Calu3 (cell line): ENCODE measurements at regions of chr17 and their contacts with region 1.

Region 1: DNA sequence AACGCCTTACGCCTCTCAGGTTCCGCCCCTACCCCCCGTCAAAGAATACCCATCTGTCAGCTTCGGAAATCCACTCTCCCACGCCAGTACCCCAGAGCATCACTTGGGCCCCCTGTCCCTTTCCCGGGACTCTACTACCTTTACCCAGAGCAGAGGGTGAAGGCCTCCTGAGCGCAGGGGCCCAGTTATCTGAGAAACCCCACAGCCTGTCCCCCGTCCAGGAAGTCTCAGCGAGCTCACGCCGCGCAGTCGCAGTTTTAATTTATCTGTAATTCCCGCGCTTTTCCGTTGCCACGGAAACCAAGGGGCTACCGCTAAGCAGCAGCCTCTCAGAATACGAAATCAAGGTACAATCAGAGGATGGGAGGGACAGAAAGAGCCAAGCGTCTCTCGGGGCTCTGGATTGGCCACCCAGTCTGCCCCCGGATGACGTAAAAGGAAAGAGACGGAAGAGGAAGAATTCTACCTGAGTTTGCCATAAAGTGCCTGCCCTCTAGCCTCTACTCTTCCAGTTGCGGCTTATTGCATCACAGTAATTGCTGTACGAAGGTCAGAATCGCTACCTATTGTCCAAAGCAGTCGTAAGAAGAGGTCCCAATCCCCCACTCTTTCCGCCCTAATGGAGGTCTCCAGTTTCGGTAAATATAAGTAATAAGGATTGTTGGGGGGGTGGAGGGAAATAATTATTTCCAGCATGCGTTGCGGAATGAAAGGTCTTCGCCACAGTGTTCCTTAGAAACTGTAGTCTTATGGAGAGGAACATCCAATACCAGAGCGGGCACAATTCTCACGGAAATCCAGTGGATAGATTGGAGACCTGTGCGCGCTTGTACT is at the start of gene BRCA1:
- DNase-seq: peak; percentile 98
- H3K4me3 Mint-ChIP-seq: peak within 1 kb of the TSS; percentile 97
- H3K27ac Mint-ChIP-seq: peak within 1 kb of the TSS; percentile 99
- H3K4me1 Mint-ChIP-seq: peaks cover 51% of the 10 kb centered on the region
- H3K27me3 Mint-ChIP-seq: no peaks in the 10 kb centered on the region
- CTCF ChIP-seq: no peak
- total RNA-seq, gene BRCA1: 62.7 and 67.1 TPM in 2 replicates

Region 2: GRCh38 chr17:43024407-43025289 is 100.7 kb before region 1 on chr17 and contains the start of gene RND2:
- CTCF ChIA-PET with region 1: interaction called, 28 read pairs
- intact Hi-C with region 1: loop called (anchors 2 kb)
- DNase-seq: peak; percentile 94
- H3K4me3 Mint-ChIP-seq: peak within 1 kb of the TSS; percentile 79
- H3K27ac Mint-ChIP-seq: peak within 1 kb of the TSS; percentile 89
- H3K4me1 Mint-ChIP-seq: peaks cover 22% of the 10 kb centered on the region
- H3K27me3 Mint-ChIP-seq: peaks cover 43% of the 10 kb centered on the region
- CTCF ChIP-seq: peak; percentile 37
- total RNA-seq, gene RND2: 0.15 and 0.40 TPM in 2 replicates

Region 3: DNA sequence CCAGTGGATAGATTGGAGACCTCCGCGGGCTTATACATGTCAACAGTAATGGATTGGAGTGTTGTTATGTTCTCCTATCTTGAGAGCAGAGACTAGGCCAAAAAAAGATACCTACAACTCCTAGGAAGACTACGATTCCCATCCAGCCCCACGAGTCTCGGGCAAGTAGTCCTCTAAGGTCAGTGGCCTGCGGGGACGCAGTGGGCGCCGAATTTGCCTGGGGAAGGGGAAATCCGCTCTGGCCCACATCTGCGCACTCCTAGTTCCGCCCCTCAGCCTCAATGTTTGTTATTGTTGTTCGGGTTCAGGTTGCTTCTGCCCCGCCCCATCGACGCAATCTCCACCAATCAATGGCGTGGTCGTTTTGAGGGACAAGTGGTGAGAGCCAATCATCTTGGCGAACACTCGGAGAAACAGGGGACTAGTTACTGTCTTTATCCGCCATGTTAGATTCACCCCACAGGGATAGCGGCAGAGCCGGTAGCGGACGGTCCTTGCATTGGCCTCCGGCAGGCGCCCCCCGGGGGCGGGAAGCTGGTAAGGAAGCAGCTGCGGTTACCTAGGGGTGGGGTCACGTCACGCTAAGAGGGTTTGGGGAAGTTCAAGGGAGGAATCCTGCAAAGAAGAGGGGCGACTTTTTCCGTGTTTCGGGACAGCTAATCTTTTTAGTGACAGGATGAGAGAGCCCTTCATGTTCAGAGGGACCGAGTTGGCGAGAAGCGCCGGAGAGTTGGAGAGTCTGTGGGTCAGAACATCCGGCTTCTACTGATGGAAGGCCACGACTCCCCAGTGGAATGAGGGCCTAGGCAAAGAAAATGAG is 45.6 kb after region 1 on chr17 and contains the start of gene NBR1:
- CTCF ChIA-PET with region 1: interaction called, 15 read pairs
- intact Hi-C with region 1: loop called (anchors 2 kb)
- DNase-seq: peak; percentile 97
- H3K4me3 Mint-ChIP-seq: no peak within 1 kb of the TSS
- H3K27ac Mint-ChIP-seq: no peak within 1 kb of the TSS
- H3K4me1 Mint-ChIP-seq: peaks cover 31% of the 10 kb centered on the region
- H3K27me3 Mint-ChIP-seq: no peaks in the 10 kb centered on the region
- CTCF ChIP-seq: no peak
- total RNA-seq, gene NBR1: 89.0 and 101 TPM in 2 replicates

Region 4: DNA sequence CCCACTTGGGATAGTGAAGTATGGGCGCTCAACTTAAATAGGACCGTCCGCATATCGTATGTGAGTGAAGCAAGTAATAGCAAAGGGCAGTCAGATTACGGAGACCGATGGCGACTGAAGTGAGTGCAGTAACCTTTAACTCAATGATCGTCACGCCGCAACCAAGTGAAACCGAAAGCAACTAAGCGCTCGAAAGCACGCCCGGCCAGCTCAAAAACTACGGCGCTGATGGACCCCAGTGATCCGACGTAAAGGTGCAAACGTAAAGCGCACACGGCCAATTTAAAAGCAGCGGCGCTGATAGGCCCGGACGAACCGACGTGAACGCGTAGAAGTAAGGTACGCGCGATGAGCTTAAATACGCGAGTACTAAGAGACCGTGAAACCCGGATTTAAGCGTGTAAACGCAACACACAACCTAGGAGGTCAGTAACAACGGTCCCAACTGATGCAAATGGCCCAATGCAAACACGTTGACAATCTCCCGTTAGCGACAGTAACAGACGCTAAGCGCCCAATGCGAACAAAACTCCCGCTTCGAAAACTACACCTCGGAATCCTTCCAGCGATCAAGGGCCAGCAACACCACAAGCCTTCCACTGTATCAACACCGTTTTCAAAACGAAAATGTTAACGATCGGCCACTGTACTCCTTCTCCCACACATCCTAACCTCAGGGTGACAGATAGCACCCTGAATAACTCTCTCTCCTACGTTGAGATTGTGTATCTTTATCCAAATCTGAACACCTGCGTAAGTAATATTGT is 235.6 kb after region 1 on chr17:
- CTCF ChIA-PET with region 1: interaction called, 12 read pairs
- intact Hi-C with region 1: no loop called
- DNase-seq: peak; percentile 95
- H3K4me3 Mint-ChIP-seq: peak overlapping the region; percentile 72
- H3K27ac Mint-ChIP-seq: peak overlapping the region; percentile 100
- H3K4me1 Mint-ChIP-seq: peaks cover 42% of the 10 kb centered on the region
- H3K27me3 Mint-ChIP-seq: peaks cover 13% of the 10 kb centered on the region
- CTCF ChIP-seq: no peak

Region 5: GRCh38 chr17:43891851-43892646 is 766.7 kb after region 1 on chr17:
- CTCF ChIA-PET with region 1: interaction called, 16 read pairs
- intact Hi-C with region 1: no loop called
- DNase-seq: no peak
- H3K4me3 Mint-ChIP-seq: no peak overlapping the region
- H3K27ac Mint-ChIP-seq: no peak overlapping the region
- H3K4me1 Mint-ChIP-seq: no peaks in the 10 kb centered on the region
- H3K27me3 Mint-ChIP-seq: peaks cover 66% of the 10 kb centered on the region
- CTCF ChIP-seq: no peak

Region 6: GRCh38 chr17:44565866-44566443 is 1440.6 kb after region 1 on chr17:
- CTCF ChIA-PET with region 1: interaction called, 10 read pairs
- intact Hi-C with region 1: no loop called
- DNase-seq: no peak
- H3K4me3 Mint-ChIP-seq: no peak overlapping the region
- H3K27ac Mint-ChIP-seq: no peak overlapping the region
- H3K4me1 Mint-ChIP-seq: peaks cover 6% of the 10 kb centered on the region
- H3K27me3 Mint-ChIP-seq: no peaks in the 10 kb centered on the region
- CTCF ChIP-seq: peak; percentile 60